A673 (cell line): ENCODE measurements at regions of chr15 and their contacts with region 1.

Region 1: DNA sequence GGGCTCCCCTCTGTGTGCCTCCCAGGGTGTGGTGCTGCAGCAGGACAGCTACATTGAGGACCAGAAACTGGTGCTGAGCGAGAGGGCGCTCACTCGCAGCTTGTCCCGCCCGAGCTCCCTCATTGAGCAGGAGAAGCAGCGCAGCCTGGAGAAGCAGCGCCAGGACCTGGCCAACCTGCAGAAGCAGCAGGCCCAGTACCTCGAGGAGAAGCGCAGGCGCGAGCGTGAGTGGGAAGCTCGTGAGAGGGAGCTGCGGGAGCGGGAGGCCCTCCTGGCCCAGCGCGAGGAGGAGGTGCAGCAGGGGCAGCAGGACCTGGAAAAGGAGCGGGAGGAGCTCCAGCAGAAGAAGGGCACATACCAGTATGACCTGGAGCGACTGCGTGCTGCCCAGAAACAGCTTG is 53.7 kb downstream of the KLHL25 start:
- DNase-seq: no peak
- H3K4me3 ChIP-seq: no peak overlapping the region
- H3K27ac ChIP-seq: no peak overlapping the region
- H3K4me1 ChIP-seq: no peaks in the 10 kb centered on the region
- H3K27me3 ChIP-seq: no peaks in the 10 kb centered on the region
- CTCF ChIP-seq: no peak

Region 2: DNA sequence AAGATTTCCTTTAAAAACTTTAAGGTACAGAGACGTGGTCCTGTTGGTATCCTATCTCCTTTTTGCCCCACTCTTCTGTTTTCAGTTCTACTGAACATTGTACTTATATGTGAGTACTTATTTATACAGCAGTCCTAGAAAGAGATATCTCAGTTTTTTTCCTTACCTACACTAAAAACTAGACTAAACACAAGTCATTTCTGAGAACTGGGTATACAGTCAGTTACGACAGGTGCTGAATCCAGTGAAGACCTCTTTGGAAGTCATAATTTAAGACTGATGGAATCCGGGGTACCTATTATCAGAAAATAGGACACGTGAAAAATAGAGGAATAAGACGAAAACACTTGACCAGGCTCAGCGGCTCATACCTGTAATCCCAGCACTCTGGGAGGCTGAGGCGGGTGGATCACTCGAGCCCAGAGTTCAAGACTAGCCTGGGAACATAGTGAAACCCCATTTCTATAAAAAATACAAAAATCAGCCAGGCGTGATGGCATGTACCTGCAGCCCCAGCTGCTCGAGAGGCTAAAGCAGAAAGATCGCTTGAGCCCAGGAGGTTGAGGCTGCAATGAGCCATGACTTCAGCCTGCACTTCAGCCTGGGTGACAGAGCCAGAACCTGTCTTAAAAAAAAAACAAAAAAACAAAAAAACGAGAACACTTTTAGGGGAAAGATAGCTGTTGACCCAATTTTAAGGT is 22.6 kb before region 1 on chr15:
- CTCF ChIA-PET with region 1: no interaction called
- POLR2A ChIA-PET with region 1: no interaction called
- intact Hi-C with region 1: no loop called
- DNase-seq: no peak
- H3K4me3 ChIP-seq: no peak overlapping the region
- H3K27ac ChIP-seq: no peak overlapping the region
- H3K4me1 ChIP-seq: no peaks in the 10 kb centered on the region
- H3K27me3 ChIP-seq: no peaks in the 10 kb centered on the region
- CTCF ChIP-seq: no peak

Region 3: GRCh38 chr15:85786781-85787114 is 45.7 kb after region 1 on chr15:
- CTCF ChIA-PET with region 1: no interaction called
- POLR2A ChIA-PET with region 1: interaction called, 10 read pairs
- intact Hi-C with region 1: no loop called
- DNase-seq: no peak
- H3K4me3 ChIP-seq: no peak overlapping the region
- H3K27ac ChIP-seq: no peak overlapping the region
- H3K4me1 ChIP-seq: peaks cover 10% of the 10 kb centered on the region
- H3K27me3 ChIP-seq: no peaks in the 10 kb centered on the region
- CTCF ChIP-seq: no peak